ENCODE measurements at regions of chr10 and their contacts with region 1.

Region 1: DNA sequence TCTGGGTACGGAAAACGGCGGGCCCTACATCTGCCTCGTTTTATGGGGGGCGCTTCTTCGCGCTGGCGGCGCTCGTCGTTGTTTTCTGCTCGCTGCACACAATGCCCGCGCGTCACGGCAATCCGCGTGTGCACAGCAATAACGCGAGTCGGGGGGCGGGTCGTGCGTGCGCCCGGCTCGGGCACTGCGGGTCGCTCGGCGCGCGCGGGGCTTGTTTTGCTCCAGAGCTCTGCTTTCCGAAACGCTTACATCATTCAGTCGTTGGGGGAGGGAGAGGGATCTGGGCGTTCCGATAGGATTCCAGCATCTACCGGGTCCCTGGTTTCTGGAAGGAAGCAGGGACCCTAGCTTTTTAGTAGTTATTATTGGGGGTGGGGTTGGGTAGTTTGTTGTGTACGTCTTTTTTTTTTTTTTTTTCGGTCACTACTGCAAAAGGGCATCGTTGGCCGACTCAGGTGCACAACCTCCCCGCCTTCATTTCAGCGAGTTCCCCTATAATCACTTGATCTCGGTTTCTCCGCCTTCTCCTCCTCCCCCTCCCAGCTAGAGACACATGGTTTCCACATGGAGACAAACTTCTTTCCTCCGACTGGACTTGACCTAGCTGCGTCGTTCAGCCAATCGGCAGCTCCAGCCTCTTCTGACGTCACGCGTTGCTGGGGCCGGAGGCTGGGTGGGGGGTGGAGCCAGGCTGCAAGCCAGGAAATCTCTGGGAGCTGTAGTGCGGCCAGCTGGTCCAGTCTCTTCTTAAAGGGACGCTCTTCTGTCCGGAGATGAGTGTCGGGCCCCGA is 3.5 kb downstream of the MXI1 start:
- DNase-seq: peak; percentile 95
- ATAC-seq: peak; percentile 64
- H3K4me3 ChIP-seq: peak overlapping the region; percentile 82
- H3K27ac ChIP-seq: peak overlapping the region; percentile 23
- H3K4me1 ChIP-seq: no peaks in the 10 kb centered on the region
- H3K27me3 ChIP-seq: no peaks in the 10 kb centered on the region
- CTCF ChIP-seq: no peak

Region 2: DNA sequence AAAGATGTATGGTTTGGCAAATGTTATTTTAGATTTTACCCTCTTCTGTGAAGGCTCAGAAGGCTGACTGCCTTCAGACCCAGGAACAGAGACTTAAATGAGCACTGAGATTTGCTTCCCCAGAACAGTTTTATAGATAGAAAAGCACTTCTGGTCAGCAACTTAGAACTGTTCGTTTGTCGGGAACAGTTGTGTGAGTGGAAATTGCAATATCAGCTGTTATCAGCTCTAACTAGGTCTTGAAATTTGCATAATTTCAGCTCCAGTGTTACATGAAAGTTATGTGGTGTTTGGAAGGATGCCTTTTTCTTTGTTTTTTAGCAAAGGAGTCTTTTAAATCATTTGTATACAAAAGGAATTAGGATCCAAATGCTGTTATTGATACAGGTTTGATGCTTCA is 87.3 kb before region 1 on chr10:
- CTCF ChIA-PET with region 1: no interaction called
- POLR2A ChIA-PET with region 1: no interaction called
- intact Hi-C with region 1: no loop called
- DNase-seq: no peak
- ATAC-seq: no peak
- H3K4me3 ChIP-seq: no peak overlapping the region
- H3K27ac ChIP-seq: no peak overlapping the region
- H3K4me1 ChIP-seq: no peaks in the 10 kb centered on the region
- H3K27me3 ChIP-seq: no peaks in the 10 kb centered on the region
- CTCF ChIP-seq: no peak

Region 3: GRCh38 chr10:110137142-110137545 is 73.7 kb before region 1 on chr10:
- CTCF ChIA-PET with region 1: interaction called, 6 read pairs
- POLR2A ChIA-PET with region 1: interaction called, 5 read pairs
- intact Hi-C with region 1: loop called (anchors 1 kb)
- DNase-seq: peak; percentile 72
- ATAC-seq: peak; percentile 55
- H3K4me3 ChIP-seq: no peak overlapping the region
- H3K27ac ChIP-seq: no peak overlapping the region
- H3K4me1 ChIP-seq: no peaks in the 10 kb centered on the region
- H3K27me3 ChIP-seq: no peaks in the 10 kb centered on the region
- CTCF ChIP-seq: peak; percentile 85

Region 4: DNA sequence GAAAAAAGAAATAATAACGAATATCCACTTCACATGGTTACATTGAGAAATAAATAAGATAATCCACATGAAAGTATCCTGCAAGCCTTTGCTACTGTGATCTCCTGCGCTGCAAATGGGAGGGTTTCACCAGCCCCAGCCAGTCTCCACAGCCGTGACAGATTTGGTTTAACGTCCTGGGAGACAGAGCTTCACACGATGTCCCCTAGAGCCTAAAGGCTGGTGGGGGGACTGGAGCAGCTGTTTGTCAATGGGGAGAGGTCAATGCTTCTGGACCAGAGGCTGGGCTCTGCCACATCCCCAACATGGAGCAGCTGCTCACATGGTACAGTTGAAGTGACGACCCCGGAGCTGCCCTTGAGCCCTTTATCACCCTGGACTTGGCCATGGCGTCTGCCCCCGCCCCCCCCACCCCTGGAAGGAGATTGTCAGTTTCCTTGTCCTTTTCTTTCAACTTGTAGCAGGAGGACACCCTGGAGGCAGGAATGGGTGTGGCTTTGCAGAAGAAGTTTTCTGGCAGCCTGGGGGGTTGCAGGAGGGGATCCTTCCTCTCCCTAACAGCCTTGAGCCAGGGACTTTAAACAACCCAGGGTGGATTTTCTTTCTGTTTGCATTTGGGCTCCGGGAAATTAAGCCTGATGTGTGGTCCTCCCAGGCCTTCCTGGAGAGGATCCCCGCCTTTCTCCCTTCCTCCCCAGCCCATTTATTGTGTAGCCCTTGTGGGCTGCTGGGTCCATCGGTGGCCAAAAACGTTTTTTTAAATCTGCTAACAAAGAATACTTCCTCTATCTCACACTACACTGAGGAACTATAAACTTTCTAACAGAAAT is 40.5 kb before region 1 on chr10:
- CTCF ChIA-PET with region 1: no interaction called
- POLR2A ChIA-PET with region 1: interaction called, 3 read pairs
- intact Hi-C with region 1: loop called (anchors 5 kb)
- DNase-seq: no peak
- ATAC-seq: no peak; the same call in 1 of the 2 replicates
- H3K4me3 ChIP-seq: no peak overlapping the region
- H3K27ac ChIP-seq: no peak overlapping the region
- H3K4me1 ChIP-seq: peaks cover 20% of the 10 kb centered on the region
- H3K27me3 ChIP-seq: no peaks in the 10 kb centered on the region
- CTCF ChIP-seq: no peak

Region 5: DNA sequence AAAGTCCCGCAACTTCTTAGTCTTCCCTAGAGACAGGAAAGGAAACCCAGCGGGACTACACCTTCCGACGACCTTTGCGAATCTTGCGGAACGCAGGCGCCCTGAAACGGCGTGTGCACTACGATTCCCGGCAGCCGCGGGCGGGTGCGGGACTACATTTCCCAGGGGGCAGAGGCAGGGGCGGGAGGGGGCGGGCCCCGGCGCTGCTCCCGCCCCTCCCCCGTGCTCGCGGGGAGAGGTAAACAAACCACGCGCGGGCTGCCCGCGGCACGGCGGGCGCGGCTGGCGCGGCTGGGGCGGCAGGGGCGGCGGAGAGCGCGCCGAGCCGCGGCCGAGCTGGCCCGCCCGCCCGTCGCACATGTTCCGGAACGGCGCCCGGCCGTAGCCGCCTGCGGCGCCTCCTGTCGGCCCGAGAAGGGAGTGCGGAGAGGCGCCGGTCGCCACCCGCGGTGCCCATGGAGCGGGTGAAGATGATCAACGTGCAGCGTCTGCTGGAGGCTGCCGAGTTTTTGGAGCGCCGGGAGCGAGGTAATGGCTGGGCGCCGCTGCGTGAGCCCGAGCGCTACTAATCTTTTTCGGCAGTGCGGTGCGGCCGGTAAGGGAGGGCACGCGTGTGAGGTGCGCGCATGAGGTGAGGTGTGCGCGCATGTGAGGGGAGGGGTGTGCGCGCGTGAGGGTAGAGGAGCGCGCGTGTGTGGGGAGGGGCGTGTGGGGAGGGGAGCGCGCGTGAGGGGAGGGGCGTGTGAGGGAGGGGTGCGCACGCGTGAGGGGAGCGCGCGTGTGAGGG is 15.1 kb after region 1 on chr10:
- CTCF ChIA-PET with region 1: interaction called, 7 read pairs
- POLR2A ChIA-PET with region 1: interaction called, 6 read pairs
- intact Hi-C with region 1: loop called (anchors 1 kb)
- DNase-seq: peak; percentile 90
- ATAC-seq: peak; percentile 89
- H3K4me3 ChIP-seq: peak overlapping the region; percentile 81
- H3K27ac ChIP-seq: no peak overlapping the region
- H3K4me1 ChIP-seq: 0 out of 2 replicates have a peak, but pooled peaks cover 4% of the 10 kb centered on the region
- H3K27me3 ChIP-seq: no peaks in the 10 kb centered on the region
- CTCF ChIP-seq: peak; percentile 46

Region 6: DNA sequence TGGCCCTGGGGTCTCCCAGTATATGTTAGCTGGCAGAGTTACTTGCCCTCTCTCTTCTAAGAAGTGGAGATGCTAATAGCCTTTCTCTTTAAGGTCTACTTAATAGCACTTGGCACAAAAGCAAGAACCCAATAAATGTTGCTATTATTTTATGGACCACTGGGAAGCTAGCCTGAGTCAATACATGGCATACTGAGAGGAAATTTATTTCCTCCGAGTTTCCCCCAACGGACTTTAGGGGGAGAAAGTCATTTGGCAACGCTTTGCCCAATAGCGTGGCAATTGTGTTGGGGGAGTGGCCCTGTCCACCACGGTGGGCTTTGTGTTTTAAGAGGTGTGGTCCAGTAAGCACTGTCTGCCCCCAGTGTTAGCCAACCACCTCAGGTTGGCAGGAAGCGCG is 181.3 kb after region 1 on chr10:
- CTCF ChIA-PET with region 1: no interaction called
- POLR2A ChIA-PET with region 1: interaction called, 17 read pairs
- intact Hi-C with region 1: no loop called
- DNase-seq: peak; percentile 17
- ATAC-seq: peak; percentile 30
- H3K4me3 ChIP-seq: no peak overlapping the region
- H3K27ac ChIP-seq: peak overlapping the region; percentile 20; the same call in 1 of the 2 replicates
- H3K4me1 ChIP-seq: peaks cover 17% of the 10 kb centered on the region
- H3K27me3 ChIP-seq: no peaks in the 10 kb centered on the region
- CTCF ChIP-seq: no peak

Region 7: GRCh38 chr10:110408203-110408751 is 197.4 kb after region 1 on chr10:
- CTCF ChIA-PET with region 1: no interaction called
- POLR2A ChIA-PET with region 1: interaction called, 16 read pairs
- intact Hi-C with region 1: no loop called
- DNase-seq: peak; percentile 94
- ATAC-seq: peak; percentile 59
- H3K4me3 ChIP-seq: no peak overlapping the region
- H3K27ac ChIP-seq: peak overlapping the region; percentile 96
- H3K4me1 ChIP-seq: peaks cover 49% of the 10 kb centered on the region
- H3K27me3 ChIP-seq: no peaks in the 10 kb centered on the region
- CTCF ChIP-seq: no peak

Measured in PC-3 (cell line).